BJ (cell line): ENCODE measurements at regions of chr6 and their contacts with region 1.

Region 1: DNA sequence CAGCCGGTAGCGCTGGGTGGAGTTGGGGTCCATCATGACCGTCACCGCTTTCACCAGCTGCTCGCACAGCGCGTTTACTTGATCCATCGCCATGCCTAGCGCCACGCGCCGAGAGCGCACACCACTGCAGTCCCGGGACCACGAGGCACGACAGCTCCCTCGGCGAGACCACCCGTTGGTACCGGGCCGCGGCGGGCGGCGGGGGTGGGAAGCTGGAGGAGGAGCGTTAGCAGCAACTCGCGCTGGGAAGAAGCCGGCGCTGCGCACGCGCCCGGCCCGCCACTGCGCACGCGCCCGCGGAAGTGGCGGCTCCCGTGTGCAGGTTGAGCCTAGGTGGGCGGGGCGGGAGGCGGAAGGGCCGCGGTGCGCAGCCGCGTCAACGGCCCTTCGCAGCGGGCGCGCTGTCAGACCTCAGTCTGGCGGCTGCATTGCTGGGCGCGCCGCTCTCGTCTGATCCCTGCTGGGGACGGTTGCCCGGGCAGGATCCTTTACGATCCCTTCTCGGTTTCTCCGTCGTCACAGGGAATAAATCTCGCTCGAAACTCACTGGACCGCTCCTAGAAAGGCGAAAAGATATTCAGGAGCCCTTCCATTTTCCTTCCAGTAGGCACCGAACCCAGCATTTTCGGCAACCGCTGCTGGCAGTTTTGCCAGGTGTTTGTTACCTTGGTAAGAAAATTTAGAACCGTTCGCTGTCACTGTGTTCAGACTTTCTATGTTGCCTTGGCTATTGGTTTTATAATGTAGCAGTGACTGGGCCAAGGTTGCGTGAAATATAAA is at the starts of genes POLH and XPO5:
- DNase-seq: peak; percentile 63
- H3K4me3 ChIP-seq: peak within 1 kb of the TSS; percentile 96
- H3K27me3 ChIP-seq: no peaks in the 10 kb centered on the region
- CTCF ChIP-seq: peak; percentile 35; the same call in 1 of the 2 replicates
- polyA plus RNA-seq, gene POLH: 19.6 and 26.8 TPM in 2 replicates
- polyA plus RNA-seq, gene XPO5: 28.0 and 37.7 TPM in 2 replicates

Region 2: GRCh38 chr6:43181942-43182860 is 393.8 kb before region 1 on chr6 and contains the start of gene CUL9:
- CTCF ChIA-PET with region 1: no interaction called
- POLR2A ChIA-PET with region 1: interaction called, 22 read pairs
- DNase-seq: no peak
- H3K4me3 ChIP-seq: peak within 1 kb of the TSS; percentile 77
- H3K27me3 ChIP-seq: no peaks in the 10 kb centered on the region
- CTCF ChIP-seq: no peak
- polyA plus RNA-seq, gene CUL9: 9.7 and 12.4 TPM in 2 replicates

Region 3: GRCh38 chr6:43559328-43559727 is 16.6 kb before region 1 on chr6:
- CTCF ChIA-PET with region 1: no interaction called
- POLR2A ChIA-PET with region 1: no interaction called
- DNase-seq: no peak
- H3K4me3 ChIP-seq: no peak overlapping the region
- H3K27me3 ChIP-seq: no peaks in the 10 kb centered on the region
- CTCF ChIP-seq: no peak